Activated T-helper 1 cell treated with anti-CD3 and anti-CD28 coated beads, Interleukin-12 subunit alpha, Interleukin-12 subunit beta, Interleukin-2, Interleukin-4 antibody, amounts not matched to agents 30 ng/mL and 10 ng/mL and 1 ng/mL, durations not matched to agents 14 hours and 24 hours and 36 hours (primary cell): ENCODE measurements at regions of chr12 and their contacts with region 1.

Region 1: DNA sequence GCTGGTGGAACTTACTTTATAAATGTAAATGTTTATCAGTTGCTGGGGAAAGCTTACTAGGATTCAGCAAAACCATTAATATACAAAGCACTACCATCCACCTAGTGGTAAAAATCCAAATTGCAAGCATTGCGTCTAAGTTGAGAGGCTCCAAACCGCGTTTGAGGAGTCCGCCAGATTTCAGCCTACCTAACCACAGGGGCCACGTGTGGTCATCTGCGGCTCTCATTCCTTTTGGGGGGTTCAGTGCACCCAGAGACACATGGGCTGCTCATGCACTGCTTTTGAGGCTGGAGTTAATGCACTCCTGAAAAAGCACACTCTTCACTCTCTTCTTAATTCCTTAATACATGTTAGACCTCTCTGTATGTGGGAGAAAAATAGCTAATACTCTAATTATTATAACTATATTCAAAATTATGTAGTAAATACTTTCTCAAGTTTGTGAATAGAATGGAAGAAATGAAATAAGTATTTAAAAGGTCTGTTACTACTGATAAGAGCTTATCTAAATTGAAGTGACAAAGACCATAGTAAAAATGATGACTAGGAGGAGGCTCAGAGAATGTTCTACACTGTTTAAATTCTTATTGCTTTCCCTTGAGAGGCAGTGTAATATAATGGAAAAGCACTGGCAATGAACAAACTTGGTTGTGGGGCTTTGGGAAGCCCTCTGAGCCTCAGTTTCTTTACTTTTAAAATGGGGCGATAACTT is 41.4 kb upstream of the MANSC4 start:
- DNase-seq: peak; percentile 33
- H3K4me3 Mint-ChIP-seq: peak overlapping the region; percentile 32
- H3K27ac Mint-ChIP-seq: peak overlapping the region; percentile 91
- H3K4me1 Mint-ChIP-seq: peaks cover 71% of the 10 kb centered on the region
- H3K27me3 Mint-ChIP-seq: peaks cover 22% of the 10 kb centered on the region

Region 2: DNA sequence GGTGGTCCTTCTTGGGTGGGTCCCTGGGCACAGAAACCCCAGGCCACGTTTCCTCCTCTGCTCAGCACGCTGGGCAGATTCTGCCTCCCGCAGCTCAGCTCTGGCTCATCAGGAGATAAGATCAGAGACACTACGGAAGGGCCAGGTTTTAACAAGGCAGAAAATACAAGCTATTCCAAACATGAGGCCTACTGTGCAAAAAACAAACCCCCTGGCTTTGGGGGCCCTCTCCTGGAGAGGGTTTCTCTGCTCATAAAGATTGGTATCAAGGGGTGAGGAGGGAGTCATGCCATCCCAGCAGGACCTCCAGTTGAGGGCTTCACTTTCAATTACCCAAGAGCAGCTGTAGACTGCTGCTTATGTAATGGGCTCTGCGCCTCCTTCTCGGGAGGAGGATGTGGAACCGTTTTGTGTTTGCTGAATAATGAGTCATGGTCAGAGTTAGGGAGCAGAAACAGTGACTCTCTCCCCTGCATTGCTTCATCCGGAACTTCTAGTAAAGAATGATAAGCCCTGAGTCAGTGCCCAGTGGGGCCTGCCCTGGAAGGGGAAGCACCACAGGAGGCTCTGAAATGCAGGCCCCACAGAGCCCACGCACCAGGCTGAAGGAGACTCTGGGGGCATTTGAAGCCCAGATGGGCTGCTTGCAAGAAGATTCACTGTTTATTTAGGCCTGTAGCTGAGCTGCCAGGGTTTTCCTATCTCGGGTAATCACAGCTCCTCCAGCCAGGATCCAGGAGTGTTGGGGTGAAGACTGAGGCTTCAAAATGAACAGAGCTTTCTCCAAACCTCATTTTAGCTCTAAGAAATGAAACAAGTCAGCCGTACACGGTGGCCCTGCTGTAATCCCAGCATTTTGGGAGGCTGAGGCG is 1546.7 kb before region 1 on chr12:
- intact Hi-C with region 1: loop called (anchors 10 kb)
- DNase-seq: peak; percentile 26
- H3K4me3 Mint-ChIP-seq: no peak overlapping the region
- H3K27ac Mint-ChIP-seq: peak overlapping the region; percentile 0
- H3K4me1 Mint-ChIP-seq: peaks cover 20% of the 10 kb centered on the region
- H3K27me3 Mint-ChIP-seq: no peaks in the 10 kb centered on the region

Region 3: GRCh38 chr12:27243804-27244683 is 577.4 kb before region 1 on chr12 and contains the start of gene STK38L:
- intact Hi-C with region 1: loop called (anchors 2 kb)
- DNase-seq: peak; percentile 96
- H3K4me3 Mint-ChIP-seq: peak within 1 kb of the TSS; percentile 100
- H3K27ac Mint-ChIP-seq: peak within 1 kb of the TSS; percentile 99
- H3K4me1 Mint-ChIP-seq: peaks cover 60% of the 10 kb centered on the region
- H3K27me3 Mint-ChIP-seq: no peaks in the 10 kb centered on the region
- total RNA-seq, gene STK38L: 20.5 and 23.3 TPM in 2 replicates

Region 4: GRCh38 chr12:27710592-27711316 is 110.7 kb before region 1 on chr12 and contains the start of gene MRPS35:
- intact Hi-C with region 1: loop called (anchors 1 kb)
- DNase-seq: peak; percentile 89
- H3K4me3 Mint-ChIP-seq: peak within 1 kb of the TSS; percentile 97
- H3K27ac Mint-ChIP-seq: peak within 1 kb of the TSS; percentile 96
- H3K4me1 Mint-ChIP-seq: peaks cover 26% of the 10 kb centered on the region
- H3K27me3 Mint-ChIP-seq: peaks cover 10% of the 10 kb centered on the region
- total RNA-seq, gene MRPS35: 59.8 and 72.2 TPM in 2 replicates

Region 5: GRCh38 chr12:27861428-27862167 is 40.2 kb after region 1 on chr12:
- intact Hi-C with region 1: loop called (anchors 2 kb)
- DNase-seq: no peak
- H3K4me3 Mint-ChIP-seq: no peak overlapping the region
- H3K27ac Mint-ChIP-seq: no peak overlapping the region
- H3K4me1 Mint-ChIP-seq: peaks cover 5% of the 10 kb centered on the region
- H3K27me3 Mint-ChIP-seq: peaks cover 5% of the 10 kb centered on the region

Region 6: DNA sequence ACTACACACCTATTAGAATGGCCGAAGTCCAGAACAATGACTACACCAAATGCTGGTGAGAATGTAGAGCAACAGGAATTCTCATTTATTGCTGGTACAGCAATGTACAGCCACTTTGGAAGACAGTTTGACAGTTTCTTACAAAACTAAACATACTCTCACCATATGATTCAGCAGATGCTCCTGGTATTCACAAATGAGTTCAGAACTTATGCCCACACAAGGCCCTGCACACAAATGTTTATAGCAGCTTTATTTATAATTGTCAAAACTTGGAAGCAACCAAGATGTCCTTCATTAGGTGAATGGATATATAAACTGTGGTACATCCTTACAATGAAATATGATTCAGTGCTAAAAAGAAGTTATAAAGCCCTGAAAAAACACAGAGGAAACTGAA is 112.9 kb after region 1 on chr12:
- intact Hi-C with region 1: no loop called
- DNase-seq: no peak
- H3K4me3 Mint-ChIP-seq: no peak overlapping the region
- H3K27ac Mint-ChIP-seq: no peak overlapping the region
- H3K4me1 Mint-ChIP-seq: peaks cover 6% of the 10 kb centered on the region
- H3K27me3 Mint-ChIP-seq: peaks cover 12% of the 10 kb centered on the region

Region 7: DNA sequence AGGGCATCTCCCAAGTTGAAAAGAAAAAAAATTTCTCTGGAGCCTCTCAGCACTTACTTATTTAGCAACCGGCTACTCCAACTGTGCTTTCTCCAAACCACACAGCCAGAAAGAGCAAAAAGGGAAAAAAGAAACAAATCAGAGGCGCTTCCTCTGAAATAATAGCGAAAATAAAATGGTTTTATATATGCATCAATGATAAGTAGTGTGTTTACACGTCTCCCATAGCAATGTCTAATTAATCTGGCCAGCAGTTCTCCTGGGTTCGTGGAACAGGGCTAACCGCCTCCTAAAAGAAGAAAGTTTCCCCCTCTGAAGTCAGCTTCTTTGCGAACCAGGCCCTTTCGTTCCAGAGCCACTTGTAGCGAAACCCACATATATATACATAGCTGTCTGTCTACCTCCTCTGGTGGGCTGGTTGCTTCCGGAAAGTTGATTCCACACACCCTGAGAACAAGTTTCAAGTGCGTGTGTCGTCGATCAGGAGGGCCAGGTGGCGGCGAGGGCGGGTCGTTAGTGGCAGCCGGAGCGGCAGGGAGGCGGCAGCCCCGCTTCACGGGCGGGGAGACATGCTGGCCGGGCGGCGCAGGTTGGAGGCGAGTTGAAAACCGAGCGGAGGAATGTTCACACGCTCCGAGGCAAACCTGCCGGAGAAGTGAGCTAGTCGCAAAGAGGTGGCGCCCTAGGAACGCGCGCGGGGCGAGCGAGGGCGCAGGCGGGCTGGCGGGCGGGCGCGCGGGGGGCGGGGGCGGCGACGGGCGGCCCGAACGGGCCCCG is 148.4 kb after region 1 on chr12:
- intact Hi-C with region 1: no loop called
- DNase-seq: no peak
- H3K4me3 Mint-ChIP-seq: peak overlapping the region; percentile 72
- H3K27ac Mint-ChIP-seq: peak overlapping the region; percentile 53
- H3K4me1 Mint-ChIP-seq: peaks cover 20% of the 10 kb centered on the region
- H3K27me3 Mint-ChIP-seq: peaks cover 89% of the 10 kb centered on the region

Region 8: DNA sequence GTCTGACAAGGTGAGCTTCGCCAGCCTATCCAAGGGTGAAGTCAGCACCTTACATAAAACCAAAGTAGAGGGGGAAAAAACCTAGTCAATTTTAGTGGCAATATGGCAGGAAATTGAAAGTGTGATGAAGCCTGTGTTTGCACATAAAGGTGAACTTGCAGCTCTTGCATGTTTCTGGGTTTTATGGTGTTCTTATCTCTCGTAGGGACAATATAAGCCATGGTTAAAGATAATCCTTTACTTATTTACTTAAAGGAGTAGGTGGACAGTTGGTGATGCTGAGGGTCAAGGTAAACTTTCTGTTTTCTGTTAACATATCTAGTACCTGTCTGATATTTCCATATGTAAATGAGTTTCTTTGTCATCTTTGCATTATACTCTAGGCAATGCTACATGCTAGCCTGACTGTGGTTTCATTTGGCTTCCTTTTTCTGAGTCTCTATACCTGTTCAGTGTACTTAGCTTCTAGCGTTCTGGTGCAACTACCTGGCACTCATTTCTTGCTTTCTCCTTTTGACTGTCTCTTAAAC is 401.7 kb after region 1 on chr12:
- intact Hi-C with region 1: loop called (anchors 1 kb)
- DNase-seq: no peak
- H3K4me3 Mint-ChIP-seq: peak overlapping the region; percentile 9
- H3K27ac Mint-ChIP-seq: peak overlapping the region; percentile 27
- H3K4me1 Mint-ChIP-seq: peaks cover 40% of the 10 kb centered on the region
- H3K27me3 Mint-ChIP-seq: peaks cover 3% of the 10 kb centered on the region